ENCODE measurements at regions of chr6 and their contacts with region 1.

Region 1: DNA sequence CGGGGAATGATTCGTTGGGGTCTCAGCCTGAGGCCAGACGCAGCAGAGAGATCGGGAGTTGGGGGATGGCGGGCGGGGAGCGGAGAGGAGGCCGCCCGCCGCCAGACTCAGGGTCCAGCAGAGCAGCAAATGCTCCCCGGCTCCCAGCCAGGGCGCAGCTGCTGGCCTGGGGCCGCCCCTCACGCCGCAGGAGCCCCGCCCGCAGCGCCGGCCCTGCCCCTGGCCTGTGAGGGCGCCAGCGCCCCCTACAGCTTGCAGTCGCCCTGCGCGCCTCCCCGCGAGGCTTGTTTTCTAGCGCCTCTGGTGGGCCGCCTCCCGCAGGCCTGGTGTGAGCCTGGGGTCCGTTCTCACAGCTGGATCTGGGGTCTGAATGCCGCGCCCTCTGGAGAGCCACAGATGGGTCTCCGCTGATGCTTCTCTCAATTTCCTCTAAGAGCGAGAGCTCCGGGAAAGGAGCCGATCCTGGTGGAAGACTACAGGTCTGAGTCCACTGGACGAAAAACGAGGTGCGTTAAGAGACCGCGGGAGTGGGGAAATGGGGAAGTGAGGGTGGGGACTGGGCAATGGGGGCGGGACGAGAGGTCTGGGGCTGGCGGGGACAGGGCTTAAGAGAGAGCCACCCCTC is 29.9 kb downstream of the TRIM38 start:
- DNase-seq: peak; percentile 97
- ATAC-seq: peak; percentile 94
- H3K4me3 Mint-ChIP-seq: peak overlapping the region; percentile 82
- H3K27ac Mint-ChIP-seq: peak overlapping the region; percentile 95
- H3K4me1 Mint-ChIP-seq: peaks cover 27% of the 10 kb centered on the region
- H3K27me3 Mint-ChIP-seq: no peaks in the 10 kb centered on the region

Region 2: DNA sequence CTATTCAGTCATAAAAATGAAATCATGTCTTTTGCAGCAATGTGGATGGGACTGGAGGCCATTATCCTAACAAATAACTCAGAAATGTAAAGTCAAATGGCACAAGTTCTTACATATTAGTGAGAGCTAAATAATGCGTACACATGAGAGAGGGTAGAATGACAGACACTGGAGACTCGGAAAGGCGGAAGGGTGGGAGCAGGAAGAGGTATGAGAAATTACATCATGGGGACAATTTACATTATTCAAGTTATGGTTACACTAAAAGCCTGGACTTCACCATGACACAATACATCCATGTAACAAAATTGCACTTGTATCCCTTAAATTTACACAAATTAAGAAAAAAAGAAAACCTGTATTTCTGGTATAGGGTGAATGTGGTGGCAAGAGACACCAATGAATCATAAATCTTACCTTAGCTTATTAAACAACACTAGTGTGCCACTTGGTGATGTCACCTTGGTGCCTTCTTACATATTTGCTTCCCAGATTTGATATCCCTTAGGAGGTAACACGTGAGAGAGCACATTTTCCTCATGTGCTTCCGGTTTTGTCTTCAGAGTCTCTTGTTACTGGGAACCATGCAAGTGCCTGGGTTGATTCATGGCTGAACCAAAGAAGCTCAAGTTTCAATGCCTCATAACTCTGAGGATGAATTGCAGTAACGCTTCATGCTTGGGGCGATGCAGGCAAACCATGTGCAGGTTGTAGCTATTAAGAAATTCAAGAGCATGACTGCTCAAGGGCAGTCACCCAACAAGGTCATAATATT is 1719.2 kb before region 1 on chr6:
- CTCF ChIA-PET with region 1: no interaction called
- POLR2A ChIA-PET with region 1: no interaction called
- intact Hi-C with region 1: no loop called
- DNase-seq: no peak
- ATAC-seq: no peak
- H3K4me3 Mint-ChIP-seq: no peak overlapping the region
- H3K27ac Mint-ChIP-seq: no peak overlapping the region
- H3K4me1 Mint-ChIP-seq: no peaks in the 10 kb centered on the region
- H3K27me3 Mint-ChIP-seq: peaks cover 9% of the 10 kb centered on the region

Region 3: GRCh38 chr6:25278914-25279747 is 713.4 kb before region 1 on chr6 and contains the start of gene CARMIL1:
- CTCF ChIA-PET with region 1: no interaction called
- POLR2A ChIA-PET with region 1: no interaction called
- intact Hi-C with region 1: loop called in 1 of 2 experiments (anchors 10 kb)
- DNase-seq: peak; percentile 82
- ATAC-seq: peak; percentile 75
- H3K4me3 Mint-ChIP-seq: peak within 1 kb of the TSS; percentile 82
- H3K27ac Mint-ChIP-seq: peak within 1 kb of the TSS; percentile 79
- H3K4me1 Mint-ChIP-seq: peaks cover 38% of the 10 kb centered on the region
- H3K27me3 Mint-ChIP-seq: peaks cover 5% of the 10 kb centered on the region
- total RNA-seq, gene CARMIL1: 4.5 to 4.9 TPM

Region 4: DNA sequence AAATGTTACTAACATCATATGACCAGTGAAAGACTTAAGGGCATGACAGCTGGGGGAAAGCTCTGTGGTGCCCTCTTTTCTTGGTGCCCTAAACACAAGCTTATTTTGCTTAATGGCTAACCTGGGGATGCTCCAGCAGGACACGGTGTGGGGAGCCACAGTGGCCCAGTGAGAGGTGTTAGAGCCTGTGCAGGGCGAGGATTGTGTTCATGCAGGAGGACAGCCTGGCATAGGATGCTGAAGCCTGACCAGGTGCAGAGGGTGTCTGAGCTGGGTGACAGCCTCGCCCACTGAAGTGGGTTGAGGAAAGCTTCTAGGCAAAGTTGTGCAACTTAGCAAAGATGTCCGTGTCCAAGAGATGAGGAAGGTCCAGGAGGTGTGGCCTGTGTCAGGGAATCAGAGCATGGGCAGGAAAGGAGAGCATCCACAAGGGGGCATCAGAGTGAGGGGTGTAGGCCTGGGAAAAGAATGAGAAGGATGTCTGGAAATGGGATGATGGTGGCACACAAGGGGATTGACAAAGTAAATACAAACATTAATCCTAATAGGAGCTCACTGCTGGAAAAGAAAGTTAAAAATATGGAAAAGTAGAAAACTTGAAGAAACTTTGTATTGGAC is 204.1 kb before region 1 on chr6:
- CTCF ChIA-PET with region 1: interaction called, 5 read pairs
- POLR2A ChIA-PET with region 1: no interaction called
- intact Hi-C with region 1: loop called (anchors 1 to 5 kb)
- DNase-seq: peak; percentile 60
- ATAC-seq: peak; percentile 55
- H3K4me3 Mint-ChIP-seq: no peak overlapping the region
- H3K27ac Mint-ChIP-seq: no peak overlapping the region
- H3K4me1 Mint-ChIP-seq: peaks cover 3% of the 10 kb centered on the region
- H3K27me3 Mint-ChIP-seq: peaks cover 8% of the 10 kb centered on the region

Region 5: GRCh38 chr6:25962149-25963127 is 30.1 kb before region 1 on chr6 and contains the start of gene TRIM38:
- CTCF ChIA-PET with region 1: interaction called, 12 read pairs
- POLR2A ChIA-PET with region 1: interaction called, 3 read pairs
- intact Hi-C with region 1: loop called (anchors 1 kb)
- DNase-seq: peak; percentile 82
- ATAC-seq: peak; percentile 80
- H3K4me3 Mint-ChIP-seq: peak within 1 kb of the TSS; percentile 96
- H3K27ac Mint-ChIP-seq: peak within 1 kb of the TSS; percentile 100
- H3K4me1 Mint-ChIP-seq: peaks cover 74% of the 10 kb centered on the region
- H3K27me3 Mint-ChIP-seq: no peaks in the 10 kb centered on the region
- total RNA-seq, gene TRIM38: 24.9 TPM

Region 6: DNA sequence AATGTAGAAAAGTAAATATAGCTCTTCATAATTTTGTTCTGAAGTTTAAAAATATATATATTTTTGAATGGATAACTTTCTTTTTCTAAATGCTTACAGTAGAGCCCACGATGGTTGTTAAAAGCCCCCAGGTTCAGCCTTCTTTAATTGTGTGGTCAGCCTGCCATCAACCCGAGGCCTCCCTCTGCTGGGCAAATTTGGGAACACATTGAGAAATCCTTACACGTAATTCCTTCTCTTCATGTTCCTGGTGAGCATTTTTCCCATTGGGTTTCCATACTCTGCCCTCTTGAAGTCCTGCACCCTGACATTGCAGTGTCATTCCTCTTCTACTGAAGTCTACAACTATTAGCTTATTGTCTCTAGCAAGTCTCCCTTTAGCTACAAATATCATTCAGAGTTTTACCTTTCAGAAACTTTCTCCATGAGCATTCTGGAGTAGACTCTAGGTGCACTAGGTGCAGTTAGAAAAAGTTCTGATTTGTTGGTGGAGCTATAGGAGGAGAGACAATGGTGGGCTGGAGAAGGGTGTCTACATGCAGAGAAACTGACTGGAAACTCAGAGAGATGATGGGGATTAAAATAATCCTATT is 10.7 kb after region 1 on chr6:
- CTCF ChIA-PET with region 1: interaction called, 45 read pairs
- POLR2A ChIA-PET with region 1: no interaction called
- intact Hi-C with region 1: no loop called
- DNase-seq: peak; percentile 65
- ATAC-seq: peak; percentile 47
- H3K4me3 Mint-ChIP-seq: no peak overlapping the region
- H3K27ac Mint-ChIP-seq: no peak overlapping the region
- H3K4me1 Mint-ChIP-seq: peaks cover 3% of the 10 kb centered on the region
- H3K27me3 Mint-ChIP-seq: no peaks in the 10 kb centered on the region

Region 7: DNA sequence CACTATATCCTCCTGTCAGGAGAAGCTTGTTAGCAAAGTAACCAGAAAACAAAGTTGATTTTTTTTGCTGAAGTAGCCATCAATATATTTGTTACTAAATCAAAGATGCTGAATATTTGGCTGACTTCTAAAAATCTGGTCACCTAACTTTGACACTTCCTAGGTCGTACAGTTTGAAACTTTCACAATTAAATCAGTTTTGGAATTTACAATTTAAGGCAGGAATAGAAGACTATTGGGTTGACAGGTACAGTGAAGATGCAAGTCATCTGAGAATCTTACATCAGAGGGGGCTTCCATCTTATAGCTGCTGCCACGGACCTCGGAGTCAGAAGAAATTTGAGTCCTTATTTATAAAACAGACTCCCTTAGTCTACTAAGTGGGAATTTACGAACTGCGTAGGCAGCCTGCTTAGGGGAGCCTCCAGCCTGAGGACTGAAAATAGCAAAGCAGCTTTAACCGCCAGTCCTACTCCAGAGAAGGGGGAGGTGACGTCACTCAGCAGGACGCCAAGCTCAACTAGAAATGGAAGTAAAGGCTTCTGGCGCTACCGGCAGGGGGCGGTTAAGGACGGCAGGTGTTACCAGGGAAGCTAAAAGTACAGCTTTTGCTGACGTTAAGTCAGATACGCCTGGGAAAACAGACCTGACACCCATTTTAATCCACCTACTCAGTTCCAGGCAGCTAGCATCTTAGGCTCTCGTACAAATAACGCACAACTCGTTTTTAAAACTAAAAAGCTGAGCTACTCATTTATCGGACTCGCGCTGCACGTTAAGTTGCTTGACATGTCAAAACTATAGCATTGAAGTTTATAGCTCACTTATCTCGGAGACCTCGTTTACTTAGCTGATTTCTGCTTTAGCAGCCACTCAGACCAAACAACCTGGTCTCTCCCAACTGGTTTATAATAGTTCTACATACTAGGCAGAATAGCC is 33.6 kb after region 1 on chr6:
- CTCF ChIA-PET with region 1: interaction called, 16 read pairs
- POLR2A ChIA-PET with region 1: interaction called, 30 read pairs
- intact Hi-C with region 1: no loop called
- DNase-seq: peak; percentile 96
- ATAC-seq: peak; percentile 39
- H3K4me3 Mint-ChIP-seq: peak overlapping the region; percentile 81
- H3K27ac Mint-ChIP-seq: peak overlapping the region; percentile 98
- H3K4me1 Mint-ChIP-seq: peaks cover 51% of the 10 kb centered on the region
- H3K27me3 Mint-ChIP-seq: no peaks in the 10 kb centered on the region

Region 8: DNA sequence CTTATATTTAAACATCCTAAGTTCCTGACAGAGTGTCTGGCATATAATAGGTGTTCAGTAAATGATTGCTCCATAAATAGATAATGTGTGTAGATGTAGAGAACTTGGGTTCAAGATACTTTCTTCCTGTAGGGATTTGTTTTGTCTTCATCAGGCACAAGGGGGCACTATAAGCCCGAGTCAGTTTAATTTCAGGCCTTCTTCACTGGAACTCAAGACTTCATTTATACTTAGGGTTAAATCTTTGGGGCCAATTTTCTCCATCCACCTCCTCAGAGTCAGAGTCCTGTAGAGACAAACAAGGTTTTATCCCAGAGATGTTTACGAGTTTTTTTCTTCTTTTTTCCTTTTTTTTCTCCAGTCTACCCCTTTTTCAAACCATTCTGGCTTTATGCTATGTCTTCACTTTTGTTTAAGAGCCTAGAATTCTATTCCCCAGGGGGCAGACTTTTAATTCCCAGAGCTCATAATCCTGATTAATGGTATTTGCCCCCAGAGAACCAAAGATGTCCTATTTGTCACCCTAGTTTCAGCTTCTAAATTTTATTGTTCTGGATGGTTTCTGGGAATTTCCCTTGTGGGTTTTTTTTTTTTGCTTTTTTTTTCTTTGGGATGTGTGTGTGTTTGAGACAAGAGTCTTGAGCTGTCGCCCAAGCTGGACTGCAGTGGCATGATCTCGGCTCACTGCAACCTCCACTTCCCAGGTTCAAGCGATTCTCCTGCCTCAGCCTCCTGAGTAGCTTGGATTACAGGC is 183.1 kb after region 1 on chr6:
- CTCF ChIA-PET with region 1: no interaction called
- POLR2A ChIA-PET with region 1: no interaction called
- intact Hi-C with region 1: no loop called
- DNase-seq: peak; percentile 69
- ATAC-seq: peak; percentile 14
- H3K4me3 Mint-ChIP-seq: peak overlapping the region; percentile 30
- H3K27ac Mint-ChIP-seq: peak overlapping the region; percentile 80
- H3K4me1 Mint-ChIP-seq: peaks cover 33% of the 10 kb centered on the region
- H3K27me3 Mint-ChIP-seq: no peaks in the 10 kb centered on the region

Region 9: DNA sequence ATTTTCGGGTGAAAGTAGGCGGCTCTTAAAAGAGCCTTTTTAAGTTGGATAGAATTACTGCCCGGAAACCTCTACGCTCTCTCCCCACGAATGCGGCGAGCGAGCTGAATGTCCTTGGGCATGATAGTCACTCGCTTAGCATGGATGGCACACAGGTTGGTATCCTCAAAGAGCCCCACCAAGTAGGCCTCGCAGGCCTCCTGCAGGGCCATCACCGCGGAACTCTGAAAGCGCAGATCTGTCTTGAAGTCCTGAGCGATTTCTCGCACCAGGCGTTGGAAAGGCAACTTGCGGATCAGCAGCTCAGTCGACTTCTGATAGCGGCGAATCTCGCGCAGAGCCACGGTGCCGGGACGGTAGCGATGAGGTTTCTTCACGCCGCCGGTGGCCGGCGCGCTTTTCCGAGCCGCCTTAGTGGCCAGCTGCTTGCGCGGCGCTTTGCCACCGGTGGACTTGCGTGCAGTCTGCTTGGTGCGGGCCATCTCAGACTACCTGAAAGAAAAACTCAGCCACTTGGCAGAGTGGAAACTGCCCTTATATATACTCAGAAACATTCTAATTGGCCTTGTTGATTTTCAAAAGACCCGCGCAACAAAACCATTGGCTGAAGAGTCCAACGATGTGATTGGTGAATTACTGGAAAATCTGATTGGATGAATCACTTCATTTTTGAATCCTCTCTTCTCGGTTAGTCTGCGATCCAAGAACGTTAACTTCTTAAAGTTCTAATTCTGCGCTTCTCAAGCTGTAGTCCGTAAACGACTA is 278.6 kb after region 1 on chr6:
- CTCF ChIA-PET with region 1: no interaction called
- POLR2A ChIA-PET with region 1: no interaction called
- intact Hi-C with region 1: no loop called
- DNase-seq: peak; percentile 85
- ATAC-seq: peak; percentile 43
- H3K4me3 Mint-ChIP-seq: no peak overlapping the region
- H3K27ac Mint-ChIP-seq: no peak overlapping the region
- H3K4me1 Mint-ChIP-seq: peaks cover 23% of the 10 kb centered on the region
- H3K27me3 Mint-ChIP-seq: no peaks in the 10 kb centered on the region

Region 10: GRCh38 chr6:26285143-26286134 is 292.9 kb after region 1 on chr6:
- CTCF ChIA-PET with region 1: no interaction called
- POLR2A ChIA-PET with region 1: no interaction called
- intact Hi-C with region 1: no loop called
- DNase-seq: peak; percentile 98
- ATAC-seq: peak; percentile 80
- H3K4me3 Mint-ChIP-seq: peak overlapping the region; percentile 88
- H3K27ac Mint-ChIP-seq: peak overlapping the region; percentile 99
- H3K4me1 Mint-ChIP-seq: peaks cover 14% of the 10 kb centered on the region
- H3K27me3 Mint-ChIP-seq: peaks cover 3% of the 10 kb centered on the region